ENCODE measurements at regions of chr11 and their contacts with region 1.

Region 1: GRCh38 chr11:57751676-57752253 is at the start of gene BTBD18:
- DNase-seq: peak; percentile 54
- H3K4me3 Mint-ChIP-seq: no peak within 1 kb of the TSS
- H3K27ac Mint-ChIP-seq: peak within 1 kb of the TSS; percentile 53
- H3K4me1 Mint-ChIP-seq: peaks cover 21% of the 10 kb centered on the region
- H3K27me3 Mint-ChIP-seq: no peaks in the 10 kb centered on the region
- CTCF ChIP-seq: peak; percentile 54
- total RNA-seq, gene BTBD18: not detected in 2 replicates

Region 2: DNA sequence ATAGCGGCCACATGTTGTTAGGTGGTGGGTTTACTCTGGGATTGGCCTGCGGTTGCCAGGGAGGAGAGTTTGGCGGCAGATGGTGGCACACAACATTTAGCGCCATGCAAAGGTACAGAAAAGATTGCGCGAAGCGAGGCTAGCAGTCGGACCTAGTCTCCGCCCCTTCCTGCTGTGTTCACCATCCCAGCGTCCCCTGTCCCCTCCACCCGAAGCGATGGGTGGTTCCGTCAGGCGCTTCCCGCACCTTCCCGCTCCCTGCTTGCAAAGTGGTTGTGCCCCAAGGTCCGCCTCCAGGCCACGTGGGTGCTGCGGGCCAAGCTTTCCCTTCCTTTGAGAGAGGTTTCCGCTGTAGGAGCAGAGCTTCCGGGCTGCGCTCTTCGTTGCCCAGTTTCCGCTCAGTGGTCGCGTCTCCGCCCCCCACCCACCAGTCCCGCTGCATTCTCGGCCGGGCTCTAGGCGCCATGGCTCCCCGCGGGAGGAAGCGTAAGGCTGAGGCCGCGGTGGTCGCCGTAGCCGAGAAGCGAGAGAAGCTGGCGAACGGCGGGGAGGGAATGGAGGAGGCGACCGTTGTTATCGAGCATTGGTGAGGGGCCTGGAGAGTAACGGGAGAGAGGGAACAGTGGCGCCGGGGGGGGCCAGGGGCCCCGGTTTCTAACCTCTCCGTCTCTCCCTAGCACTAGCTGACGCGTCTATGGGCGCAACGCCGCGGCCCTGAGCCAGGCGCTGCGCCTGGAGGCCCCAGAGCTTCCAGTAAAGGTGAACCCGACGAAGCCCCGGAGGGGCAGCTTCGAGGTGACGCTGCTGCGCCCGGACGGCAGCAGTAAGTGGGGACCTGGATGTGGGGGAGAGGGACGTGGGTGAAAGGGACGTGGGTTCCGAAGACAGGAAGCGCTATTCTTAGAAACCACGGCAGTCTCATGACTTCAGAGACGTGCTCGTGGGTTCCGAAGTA is 10.4 kb before region 1 on chr11 and contains the start of gene SELENOH:
- CTCF ChIA-PET with region 1: interaction called, 11 read pairs
- intact Hi-C with region 1: no loop called
- DNase-seq: peak; percentile 97
- H3K4me3 Mint-ChIP-seq: peak within 1 kb of the TSS; percentile 96
- H3K27ac Mint-ChIP-seq: peak within 1 kb of the TSS; percentile 85
- H3K4me1 Mint-ChIP-seq: peaks cover 10% of the 10 kb centered on the region
- H3K27me3 Mint-ChIP-seq: no peaks in the 10 kb centered on the region
- CTCF ChIP-seq: no peak
- total RNA-seq, gene SELENOH: 124 and 131 TPM in 2 replicates

Region 3: GRCh38 chr11:57770793-57771192 is 19.0 kb after region 1 on chr11:
- CTCF ChIA-PET with region 1: no interaction called
- intact Hi-C with region 1: no loop called
- DNase-seq: no peak
- H3K4me3 Mint-ChIP-seq: peak overlapping the region; percentile 10
- H3K27ac Mint-ChIP-seq: peak overlapping the region; percentile 57
- H3K4me1 Mint-ChIP-seq: peaks cover 78% of the 10 kb centered on the region
- H3K27me3 Mint-ChIP-seq: no peaks in the 10 kb centered on the region
- CTCF ChIP-seq: no peak

Region 4: GRCh38 chr11:58286249-58286648 is 534.5 kb after region 1 on chr11:
- CTCF ChIA-PET with region 1: interaction called, 10 read pairs
- intact Hi-C with region 1: loop called (anchors 5 kb)
- DNase-seq: peak; percentile 38
- H3K4me3 Mint-ChIP-seq: no peak overlapping the region
- H3K27ac Mint-ChIP-seq: no peak overlapping the region
- H3K4me1 Mint-ChIP-seq: peaks cover 15% of the 10 kb centered on the region
- H3K27me3 Mint-ChIP-seq: no peaks in the 10 kb centered on the region
- CTCF ChIP-seq: peak; percentile 31